A673 (cell line): ENCODE measurements at regions of chr2 and their contacts with region 1.

Region 1: DNA sequence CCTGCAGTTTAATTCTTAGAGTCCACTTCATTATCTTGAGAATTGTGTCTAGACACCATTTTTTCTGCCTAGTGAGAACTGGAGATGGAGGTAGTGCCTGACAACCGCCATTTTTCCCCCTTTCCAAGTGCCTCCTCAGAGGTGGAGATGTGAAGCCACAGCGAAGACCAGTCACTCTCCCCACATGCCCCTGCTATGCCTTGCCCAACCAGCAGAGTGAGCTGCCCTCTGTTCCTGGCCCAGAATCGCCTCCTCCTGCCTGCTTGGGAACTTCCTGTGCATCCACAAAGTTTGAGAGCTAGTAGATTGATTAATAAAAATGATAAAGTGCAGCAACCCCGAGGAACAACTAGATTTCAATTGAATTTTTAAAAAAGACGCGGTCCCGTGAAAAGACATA is 123.3 kb downstream of the CLIP4 start:
- DNase-seq: peak; percentile 68
- H3K4me3 ChIP-seq: no peak overlapping the region
- H3K27ac ChIP-seq: no peak overlapping the region
- H3K4me1 ChIP-seq: no peaks in the 10 kb centered on the region
- H3K27me3 ChIP-seq: no peaks in the 10 kb centered on the region
- CTCF ChIP-seq: peak; percentile 72

Region 2: GRCh38 chr2:29225814-29226213 is 12.7 kb before region 1 on chr2:
- CTCF ChIA-PET with region 1: interaction called, 17 read pairs
- POLR2A ChIA-PET with region 1: no interaction called
- intact Hi-C with region 1: no loop called
- DNase-seq: no peak
- H3K4me3 ChIP-seq: no peak overlapping the region
- H3K27ac ChIP-seq: no peak overlapping the region
- H3K4me1 ChIP-seq: peaks cover 9% of the 10 kb centered on the region
- H3K27me3 ChIP-seq: no peaks in the 10 kb centered on the region
- CTCF ChIP-seq: no peak